CD4-positive, alpha-beta T cell (primary cell): ENCODE measurements at regions of chr1 and their contacts with region 1.

Region 1: GRCh38 chr1:32400876-32401631 is 6.8 kb upstream of the BSDC1 start:
- DNase-seq: peak; percentile 8 to 71 (median 37)
- ATAC-seq: peak; percentile 52
- H3K4me3 ChIP-seq: no peak overlapping the region
- H3K4me3 Mint-ChIP-seq: no peak overlapping the region
- H3K27ac ChIP-seq: no peak overlapping the region
- H3K27ac Mint-ChIP-seq: no peak overlapping the region
- H3K4me1 ChIP-seq: peaks cover 7% of the 10 kb centered on the region
- H3K4me1 Mint-ChIP-seq: no peaks in the 10 kb centered on the region
- H3K27me3 ChIP-seq: no peaks in the 10 kb centered on the region
- H3K27me3 Mint-ChIP-seq: no peaks in the 10 kb centered on the region
- CTCF ChIP-seq: peak; percentile 86

Region 2: DNA sequence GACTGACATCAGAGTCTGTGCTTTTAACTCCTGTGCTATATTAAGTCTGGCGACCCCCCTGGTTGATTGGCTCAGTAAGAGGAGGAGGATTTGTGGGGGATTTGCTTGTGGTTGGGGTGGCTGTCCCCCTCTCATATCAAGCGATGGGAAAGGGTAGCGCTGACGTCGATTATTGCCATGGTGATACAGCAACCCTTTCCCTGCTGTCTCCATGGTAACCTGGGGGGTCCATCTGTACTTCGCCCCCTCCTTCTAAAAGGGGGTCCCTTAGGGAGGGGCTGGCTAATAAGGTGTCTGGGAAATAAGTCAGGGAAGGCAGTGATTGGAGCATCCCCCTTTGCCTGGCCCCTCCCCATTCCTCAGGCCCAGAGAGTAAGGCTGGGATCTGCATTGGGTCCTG is 43.4 kb before region 1 on chr1:
- CTCF ChIA-PET with region 1: no interaction called
- POLR2A ChIA-PET with region 1: no interaction called
- intact Hi-C with region 1: no loop called
- DNase-seq: no peak
- ATAC-seq: no peak
- H3K4me3 ChIP-seq: no peak overlapping the region
- H3K4me3 Mint-ChIP-seq: no peak overlapping the region
- H3K27ac ChIP-seq: no peak overlapping the region
- H3K27ac Mint-ChIP-seq: no peak overlapping the region
- H3K4me1 ChIP-seq: peaks cover 30% of the 10 kb centered on the region
- H3K4me1 Mint-ChIP-seq: peaks cover 32% of the 10 kb centered on the region
- H3K27me3 ChIP-seq: peaks cover 0 to 3% of the 10 kb centered on the region in 2 experiments
- H3K27me3 Mint-ChIP-seq: peaks cover 5% of the 10 kb centered on the region
- CTCF ChIP-seq: no peak

Region 3: DNA sequence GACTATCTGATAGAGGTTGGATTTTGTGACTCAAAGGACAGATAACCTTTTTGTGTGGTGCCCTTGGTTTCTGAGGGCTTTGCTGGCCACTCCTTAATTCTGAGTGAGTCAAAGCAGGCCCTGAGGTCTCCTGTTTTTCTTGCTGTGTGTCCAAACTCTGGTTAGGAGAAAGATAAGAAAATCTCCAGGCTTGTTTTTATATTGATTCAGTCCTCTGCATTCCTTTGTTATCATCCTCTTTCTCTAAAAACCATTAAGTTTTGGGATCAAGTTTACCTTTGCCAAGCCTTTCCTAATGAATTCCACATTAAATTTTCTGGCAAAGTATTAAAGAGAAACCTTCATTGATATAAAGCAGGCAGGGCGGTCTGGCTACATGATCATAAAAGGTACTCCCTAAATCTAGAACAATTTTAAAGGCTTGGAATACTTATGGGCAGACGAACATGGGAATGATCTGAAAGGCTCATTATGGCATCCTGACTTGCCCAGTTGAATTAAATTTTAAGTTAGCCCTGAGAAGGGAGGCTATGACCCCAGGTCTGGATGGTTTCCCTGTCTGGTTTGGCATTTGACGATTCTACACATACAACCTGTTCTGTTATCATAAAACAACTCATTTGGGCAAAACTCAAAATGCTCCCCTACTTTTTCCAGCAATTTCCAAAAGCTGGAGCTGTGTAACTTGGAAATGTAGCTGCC is 84.7 kb after region 1 on chr1:
- CTCF ChIA-PET with region 1: no interaction called
- POLR2A ChIA-PET with region 1: no interaction called
- intact Hi-C with region 1: no loop called
- DNase-seq: no peak
- ATAC-seq: no peak
- H3K4me3 ChIP-seq: no peak overlapping the region
- H3K4me3 Mint-ChIP-seq: no peak overlapping the region
- H3K27ac ChIP-seq: no peak overlapping the region
- H3K27ac Mint-ChIP-seq: no peak overlapping the region
- H3K4me1 ChIP-seq: no peaks in the 10 kb centered on the region
- H3K4me1 Mint-ChIP-seq: no peaks in the 10 kb centered on the region
- H3K27me3 ChIP-seq: peaks cover 0 to 2% of the 10 kb centered on the region in 2 experiments
- H3K27me3 Mint-ChIP-seq: peaks cover 23% of the 10 kb centered on the region
- CTCF ChIP-seq: no peak

Region 4: GRCh38 chr1:32773018-32773763 is 372.1 kb after region 1 on chr1:
- CTCF ChIA-PET with region 1: interaction called, 7 read pairs
- POLR2A ChIA-PET with region 1: no interaction called
- intact Hi-C with region 1: loop called (anchors 5 to 10 kb)
- DNase-seq: peak; percentile 59 to 85 (median 71)
- ATAC-seq: peak; percentile 89
- H3K4me3 ChIP-seq: no peak overlapping the region
- H3K4me3 Mint-ChIP-seq: no peak overlapping the region
- H3K27ac ChIP-seq: no peak overlapping the region
- H3K27ac Mint-ChIP-seq: no peak overlapping the region
- H3K4me1 ChIP-seq: peaks cover 8% of the 10 kb centered on the region
- H3K4me1 Mint-ChIP-seq: peaks cover 5% of the 10 kb centered on the region
- H3K27me3 ChIP-seq: no peaks in the 10 kb centered on the region
- H3K27me3 Mint-ChIP-seq: no peaks in the 10 kb centered on the region
- CTCF ChIP-seq: peak; percentile 87